Activated T-helper 2 cell treated with anti-CD3 and anti-CD28 coated beads, Interferon-gamma antibody, Interleukin-2, Interleukin-4, amounts not matched to agents 10 μg/mL and 5 μg/mL and 100 μg/mL, durations not matched to agents 14 hours and 24 hours and 36 hours (primary cell): ENCODE measurements at regions of chr9 and their contacts with region 1.

Region 1: DNA sequence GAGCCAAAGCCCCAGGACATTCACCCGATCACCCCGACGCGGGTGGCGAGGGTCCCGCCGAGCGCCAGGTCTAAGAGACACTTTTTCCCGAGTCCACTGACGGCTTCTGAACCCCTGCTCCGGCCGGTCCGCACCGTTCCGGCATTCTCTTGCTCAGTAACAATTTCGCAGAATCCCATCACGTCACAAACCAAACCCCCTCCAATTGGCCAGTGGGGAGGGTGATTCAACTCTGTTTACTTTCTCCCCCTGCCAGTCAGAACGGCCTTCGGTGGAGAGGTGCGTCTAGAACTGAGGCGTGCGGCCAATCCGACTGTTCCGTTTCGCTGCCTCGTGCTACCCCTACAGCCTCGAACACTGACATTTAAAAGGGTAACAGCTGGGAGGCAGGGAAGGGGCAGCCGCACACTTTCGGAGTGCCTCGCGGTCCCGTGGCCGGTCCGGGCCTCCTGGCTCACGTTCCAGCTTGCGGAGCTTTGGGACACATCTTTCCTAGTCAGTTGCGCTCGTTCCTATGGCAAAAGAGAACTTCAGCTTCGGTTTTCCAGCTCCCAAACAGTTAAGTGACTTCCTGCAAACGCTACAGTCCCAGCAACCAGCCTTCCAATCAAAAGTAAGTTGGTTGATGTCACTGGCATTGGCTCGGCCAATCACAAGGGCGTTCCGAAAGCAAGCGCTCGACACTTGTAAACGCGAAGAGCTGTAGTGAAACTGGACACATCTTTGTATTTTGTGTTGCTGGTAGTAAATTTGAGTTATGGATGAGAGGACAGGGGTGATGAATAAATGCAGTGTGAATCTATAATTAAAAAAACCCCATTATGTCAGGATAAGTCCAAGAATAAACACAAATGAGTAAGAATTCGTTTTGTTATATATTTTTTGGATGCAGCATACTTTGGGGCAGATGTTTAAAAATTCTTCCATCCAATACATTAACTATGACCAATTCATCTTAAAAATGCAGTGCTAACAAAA is at the start of gene KLF9:
- DNase-seq: peak; percentile 92
- H3K4me3 Mint-ChIP-seq: peak within 1 kb of the TSS; percentile 95
- H3K27ac Mint-ChIP-seq: peak within 1 kb of the TSS; percentile 100
- H3K4me1 Mint-ChIP-seq: peaks cover 41% of the 10 kb centered on the region
- H3K27me3 Mint-ChIP-seq: no peaks in the 10 kb centered on the region
- total RNA-seq, gene KLF9: 13.5 and 13.7 TPM in 2 replicates

Region 2: DNA sequence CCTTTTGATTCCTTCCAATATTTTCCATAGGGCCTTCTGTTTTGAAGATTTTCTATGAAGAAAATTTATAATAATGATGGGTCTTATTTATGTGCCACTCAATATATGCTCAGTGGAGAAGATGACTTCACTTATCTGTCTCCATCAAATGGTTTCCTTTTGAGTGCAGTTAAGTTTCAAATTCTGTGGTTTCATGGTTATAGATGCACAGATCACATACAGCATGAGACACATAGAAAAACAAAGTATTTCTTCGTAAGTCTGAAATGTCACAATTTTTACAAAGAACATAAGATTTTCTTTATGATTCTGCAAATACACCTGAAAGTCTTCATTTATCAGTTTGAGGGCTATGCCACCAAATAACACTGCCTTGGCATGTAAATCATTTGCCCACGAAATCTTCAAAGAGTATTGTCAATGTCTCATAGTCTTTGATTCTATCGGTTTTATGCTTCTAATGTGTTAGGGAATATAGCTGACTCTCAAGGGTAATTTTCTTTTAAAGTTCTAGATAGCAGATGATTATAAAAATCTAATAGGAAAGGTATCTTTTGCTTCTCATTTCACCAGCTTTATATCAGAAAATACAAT is 579.4 kb before region 1 on chr9:
- intact Hi-C with region 1: loop called (anchors 5 kb)
- DNase-seq: no peak
- H3K4me3 Mint-ChIP-seq: peak overlapping the region; percentile 33
- H3K27ac Mint-ChIP-seq: peak overlapping the region; percentile 78
- H3K4me1 Mint-ChIP-seq: peaks cover 50% of the 10 kb centered on the region
- H3K27me3 Mint-ChIP-seq: no peaks in the 10 kb centered on the region

Region 3: GRCh38 chr9:70392189-70392588 is 21.9 kb before region 1 on chr9:
- intact Hi-C with region 1: loop called (anchors 2 kb)
- DNase-seq: no peak
- H3K4me3 Mint-ChIP-seq: no peak overlapping the region
- H3K27ac Mint-ChIP-seq: no peak overlapping the region
- H3K4me1 Mint-ChIP-seq: peaks cover 29% of the 10 kb centered on the region
- H3K27me3 Mint-ChIP-seq: no peaks in the 10 kb centered on the region

Region 4: DNA sequence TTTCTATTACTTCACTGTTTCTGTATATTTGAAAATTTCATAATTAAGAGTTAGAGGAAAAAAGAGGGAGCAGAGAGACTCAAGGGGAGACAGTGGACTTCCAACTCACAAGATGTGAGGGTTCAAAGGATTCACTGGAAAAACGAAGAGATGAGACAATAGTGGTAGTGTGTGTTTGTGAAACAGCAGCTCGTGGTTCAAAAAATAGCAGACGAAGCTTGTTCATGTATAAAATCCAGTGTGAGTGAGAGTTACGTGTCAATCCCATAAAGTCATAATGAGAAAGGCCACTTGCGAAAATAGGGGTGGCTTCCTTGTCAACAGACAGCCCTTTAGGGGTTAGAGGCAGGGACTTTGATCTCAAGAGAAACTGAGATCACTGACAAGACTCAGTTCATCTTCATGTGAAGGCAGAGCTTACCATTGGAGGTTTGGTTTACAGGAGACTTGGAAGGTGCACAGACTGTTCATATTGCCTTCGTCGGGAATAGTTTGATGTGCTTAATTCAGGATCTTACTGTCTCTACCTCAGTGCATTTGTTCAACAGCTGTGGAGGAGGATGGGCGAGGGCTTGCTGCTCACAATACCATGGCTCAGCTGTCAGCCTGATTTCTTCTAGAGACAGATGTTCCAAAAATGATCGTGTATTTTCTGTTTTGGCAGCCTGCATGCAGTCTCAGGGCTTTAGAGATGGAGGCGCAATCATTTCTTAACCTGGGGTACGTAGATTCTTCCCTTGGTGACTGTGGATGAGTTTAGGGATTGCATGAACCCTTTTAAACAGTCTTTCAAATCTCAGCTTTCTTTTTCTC is 106.0 kb after region 1 on chr9:
- intact Hi-C with region 1: loop called (anchors 1 kb)
- DNase-seq: peak; percentile 12
- H3K4me3 Mint-ChIP-seq: peak overlapping the region; percentile 40
- H3K27ac Mint-ChIP-seq: peak overlapping the region; percentile 76
- H3K4me1 Mint-ChIP-seq: peaks cover 28% of the 10 kb centered on the region
- H3K27me3 Mint-ChIP-seq: no peaks in the 10 kb centered on the region

Region 5: GRCh38 chr9:70574151-70574837 is 160.2 kb after region 1 on chr9:
- intact Hi-C with region 1: no loop called
- DNase-seq: no peak
- H3K4me3 Mint-ChIP-seq: no peak overlapping the region
- H3K27ac Mint-ChIP-seq: no peak overlapping the region
- H3K4me1 Mint-ChIP-seq: no peaks in the 10 kb centered on the region
- H3K27me3 Mint-ChIP-seq: no peaks in the 10 kb centered on the region

Region 6: GRCh38 chr9:71768388-71769174 is 1354.5 kb after region 1 on chr9 and contains the start of gene CEMIP2:
- intact Hi-C with region 1: loop called (anchors 5 kb)
- DNase-seq: peak; percentile 86
- H3K4me3 Mint-ChIP-seq: peak within 1 kb of the TSS; percentile 89
- H3K27ac Mint-ChIP-seq: peak within 1 kb of the TSS; percentile 88
- H3K4me1 Mint-ChIP-seq: peaks cover 44% of the 10 kb centered on the region
- H3K27me3 Mint-ChIP-seq: no peaks in the 10 kb centered on the region
- total RNA-seq, gene CEMIP2: 44.8 and 45.3 TPM in 2 replicates

Region 7: GRCh38 chr9:72364679-72365524 is 1950.8 kb after region 1 on chr9 and contains the start of gene ZFAND5:
- intact Hi-C with region 1: loop called (anchors 5 kb)
- DNase-seq: peak; percentile 86
- H3K4me3 Mint-ChIP-seq: peak within 1 kb of the TSS; percentile 90
- H3K27ac Mint-ChIP-seq: peak within 1 kb of the TSS; percentile 92
- H3K4me1 Mint-ChIP-seq: peaks cover 29% of the 10 kb centered on the region
- H3K27me3 Mint-ChIP-seq: no peaks in the 10 kb centered on the region
- total RNA-seq, gene ZFAND5: 95.5 and 99.1 TPM in 2 replicates